ENCODE measurements at regions of chr13 and their contacts with region 1.

Region 1: DNA sequence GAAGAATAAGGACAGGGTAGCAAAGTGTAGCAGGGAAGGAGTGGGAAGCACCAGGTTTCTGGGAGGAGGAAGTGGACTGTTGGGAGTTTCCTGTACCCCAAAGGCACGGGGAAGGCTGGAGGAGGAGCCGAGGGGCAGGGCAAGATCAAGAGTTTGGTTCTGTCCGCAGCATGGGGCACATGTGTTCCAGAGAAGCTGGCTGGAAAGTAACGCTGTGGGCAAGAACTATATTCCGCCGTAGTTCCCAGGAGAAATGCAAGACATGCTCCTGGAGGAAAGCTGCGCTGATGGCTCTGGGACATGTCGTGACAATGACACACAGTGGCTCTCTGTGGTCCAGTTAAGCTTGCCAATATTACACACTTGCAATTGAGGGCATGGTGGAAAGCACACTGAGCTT is 51.7 kb upstream of the KPNA3 start:
- DNase-seq: no peak
- H3K4me3 Mint-ChIP-seq: no peak overlapping the region
- H3K27ac Mint-ChIP-seq: no peak overlapping the region
- H3K4me1 Mint-ChIP-seq: peaks cover 8% of the 10 kb centered on the region
- H3K27me3 Mint-ChIP-seq: no peaks in the 10 kb centered on the region
- CTCF ChIP-seq: no peak

Region 2: GRCh38 chr13:49652355-49653305 is 191.6 kb before region 1 on chr13:
- CTCF ChIA-PET with region 1: interaction called, 4 read pairs
- POLR2A ChIA-PET with region 1: interaction called, 4 read pairs
- intact Hi-C with region 1: loop called (anchors 1 kb)
- DNase-seq: peak; percentile 59
- H3K4me3 Mint-ChIP-seq: no peak overlapping the region
- H3K27ac Mint-ChIP-seq: no peak overlapping the region
- H3K4me1 Mint-ChIP-seq: no peaks in the 10 kb centered on the region
- H3K27me3 Mint-ChIP-seq: no peaks in the 10 kb centered on the region
- CTCF ChIP-seq: peak; percentile 34

Region 3: DNA sequence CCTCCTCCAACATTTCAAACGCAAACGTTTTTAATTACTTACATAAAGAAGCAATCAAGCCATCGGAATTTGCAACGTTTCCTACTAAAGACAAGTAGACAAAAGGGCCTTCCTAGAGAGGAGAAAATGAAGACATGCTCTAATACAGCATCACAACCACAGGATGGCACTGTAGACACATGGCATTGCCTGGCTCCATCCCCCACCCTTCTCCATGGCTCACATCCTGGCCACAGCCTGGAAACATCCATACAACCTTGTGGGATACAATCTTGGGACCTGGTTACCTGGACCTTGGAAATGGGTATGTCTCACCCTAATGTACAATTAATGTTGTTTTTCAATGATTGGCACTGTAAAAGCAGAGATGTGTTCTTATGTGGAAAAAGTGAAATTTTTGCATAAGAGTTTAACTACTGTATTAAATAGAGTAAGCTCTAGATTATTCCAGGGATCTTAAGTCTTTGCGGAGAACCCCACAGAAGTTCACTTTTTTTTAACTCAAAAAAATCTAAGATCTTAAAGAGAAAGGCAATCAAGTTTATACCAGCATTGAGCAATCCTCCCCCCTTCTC is 174.4 kb before region 1 on chr13:
- CTCF ChIA-PET with region 1: interaction called, 3 read pairs
- POLR2A ChIA-PET with region 1: interaction called, 4 read pairs
- intact Hi-C with region 1: loop called (anchors 1 kb)
- DNase-seq: peak; percentile 73
- H3K4me3 Mint-ChIP-seq: no peak overlapping the region
- H3K27ac Mint-ChIP-seq: no peak overlapping the region
- H3K4me1 Mint-ChIP-seq: peaks cover 30% of the 10 kb centered on the region
- H3K27me3 Mint-ChIP-seq: no peaks in the 10 kb centered on the region
- CTCF ChIP-seq: peak; percentile 73

Region 4: DNA sequence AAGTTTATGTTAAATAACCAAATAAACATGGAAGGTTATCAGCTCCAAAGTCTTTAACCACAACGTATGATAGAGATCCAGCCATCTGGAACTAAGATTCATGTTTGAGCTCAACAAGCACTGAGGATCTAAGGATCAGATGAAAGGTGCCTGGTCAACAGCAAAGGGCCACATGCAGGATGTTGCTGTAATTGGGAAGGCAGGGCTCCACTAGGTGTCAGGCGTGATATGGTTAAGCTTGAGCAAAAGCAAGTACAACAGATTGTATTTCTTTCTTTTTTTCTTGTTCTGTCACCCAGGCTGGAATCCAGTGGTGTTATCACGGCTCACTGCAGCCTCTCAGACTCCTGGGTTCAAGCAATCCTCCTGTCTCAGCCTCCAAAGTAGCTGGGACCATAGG is 164.9 kb before region 1 on chr13:
- CTCF ChIA-PET with region 1: no interaction called
- POLR2A ChIA-PET with region 1: no interaction called
- intact Hi-C with region 1: loop called (anchors 1 kb)
- DNase-seq: peak; percentile 16
- H3K4me3 Mint-ChIP-seq: no peak overlapping the region
- H3K27ac Mint-ChIP-seq: peak overlapping the region; percentile 71
- H3K4me1 Mint-ChIP-seq: peaks cover 8% of the 10 kb centered on the region
- H3K27me3 Mint-ChIP-seq: no peaks in the 10 kb centered on the region
- CTCF ChIP-seq: peak; percentile 35

Region 5: DNA sequence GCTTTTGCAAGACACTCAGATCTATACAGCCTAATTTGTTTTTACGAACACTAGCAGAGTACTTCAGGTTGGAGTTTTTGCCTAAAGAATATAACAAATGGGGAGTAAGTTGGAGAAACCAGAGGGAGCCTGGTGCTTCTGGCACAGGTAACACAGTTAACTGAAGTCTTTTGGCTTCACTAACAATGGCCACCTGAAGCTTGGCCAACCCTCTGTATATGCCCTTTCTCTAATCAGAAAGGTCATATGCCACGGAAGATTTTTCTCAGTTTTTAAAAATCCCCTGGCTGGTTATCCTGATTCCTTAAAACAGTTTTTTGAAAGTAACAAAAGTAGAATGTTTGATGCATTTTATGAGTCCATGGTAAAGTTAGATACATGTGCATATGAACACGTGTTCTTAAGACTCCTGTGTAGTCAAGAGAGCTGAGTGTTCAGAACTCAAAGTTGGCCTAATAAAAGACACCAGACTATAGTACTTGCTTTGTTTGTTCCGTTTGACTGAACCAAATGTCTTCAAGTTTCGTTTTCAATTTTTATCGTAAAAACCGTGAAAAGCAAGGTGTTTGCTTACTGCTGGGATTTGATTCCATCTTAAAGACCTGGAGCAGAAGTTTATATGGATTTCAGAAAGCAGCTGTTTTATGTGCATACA is 308.6 kb after region 1 on chr13:
- CTCF ChIA-PET with region 1: no interaction called
- POLR2A ChIA-PET with region 1: no interaction called
- intact Hi-C with region 1: no loop called
- DNase-seq: no peak
- H3K4me3 Mint-ChIP-seq: peak overlapping the region; percentile 53
- H3K27ac Mint-ChIP-seq: no peak overlapping the region
- H3K4me1 Mint-ChIP-seq: peaks cover 17% of the 10 kb centered on the region
- H3K27me3 Mint-ChIP-seq: no peaks in the 10 kb centered on the region
- CTCF ChIP-seq: no peak